Activated CD8-positive, alpha-beta T cell treated with anti-CD3 and anti-CD28 coated beads, Interleukin-2, amount 10 ng/mL, durations not matched to agents 7 days and 5 days (primary cell): ENCODE measurements at regions of chr12 and their contacts with region 1.

Region 1: DNA sequence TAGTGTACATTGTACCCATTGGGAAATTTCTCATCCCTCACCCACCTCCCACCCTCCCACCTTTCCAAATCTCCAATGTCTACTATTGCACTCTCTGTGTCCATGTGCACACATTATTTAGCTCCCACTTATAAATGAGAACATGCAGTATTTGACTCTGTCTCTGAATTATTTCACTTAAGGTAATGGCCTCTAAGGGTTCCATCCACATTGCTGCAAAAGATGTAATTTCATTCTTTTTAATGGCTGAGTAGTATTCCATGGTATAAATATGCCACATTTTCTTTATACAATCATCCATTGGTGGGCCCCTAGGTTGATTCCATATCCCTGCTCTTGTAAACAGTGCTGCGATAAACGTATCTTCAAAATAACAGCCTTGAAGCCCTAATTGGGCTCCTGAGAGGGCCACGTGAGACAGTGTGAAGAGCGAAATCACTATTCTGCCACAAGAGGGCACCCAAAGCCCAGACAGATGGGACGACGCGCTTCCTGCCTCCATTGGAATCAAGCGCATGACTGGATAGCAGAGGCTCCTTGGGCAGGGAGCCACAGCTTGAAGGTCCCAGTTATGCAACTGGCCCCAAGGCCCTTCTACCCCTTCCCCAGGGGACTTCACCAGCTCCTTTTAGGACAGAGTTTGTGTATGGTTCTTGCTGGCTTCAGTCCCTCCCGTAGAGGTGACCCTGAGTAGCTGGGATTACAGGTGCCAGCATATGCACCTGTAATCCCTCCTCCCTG is 21.3 kb upstream of the CD27 start:
- DNase-seq: peak; percentile 88
- ATAC-seq: peak; percentile 75
- H3K4me3 Mint-ChIP-seq: no peak overlapping the region
- H3K27ac Mint-ChIP-seq: peak overlapping the region; percentile 83
- H3K4me1 Mint-ChIP-seq: peaks cover 49% of the 10 kb centered on the region
- H3K27me3 Mint-ChIP-seq: no peaks in the 10 kb centered on the region

Region 2: DNA sequence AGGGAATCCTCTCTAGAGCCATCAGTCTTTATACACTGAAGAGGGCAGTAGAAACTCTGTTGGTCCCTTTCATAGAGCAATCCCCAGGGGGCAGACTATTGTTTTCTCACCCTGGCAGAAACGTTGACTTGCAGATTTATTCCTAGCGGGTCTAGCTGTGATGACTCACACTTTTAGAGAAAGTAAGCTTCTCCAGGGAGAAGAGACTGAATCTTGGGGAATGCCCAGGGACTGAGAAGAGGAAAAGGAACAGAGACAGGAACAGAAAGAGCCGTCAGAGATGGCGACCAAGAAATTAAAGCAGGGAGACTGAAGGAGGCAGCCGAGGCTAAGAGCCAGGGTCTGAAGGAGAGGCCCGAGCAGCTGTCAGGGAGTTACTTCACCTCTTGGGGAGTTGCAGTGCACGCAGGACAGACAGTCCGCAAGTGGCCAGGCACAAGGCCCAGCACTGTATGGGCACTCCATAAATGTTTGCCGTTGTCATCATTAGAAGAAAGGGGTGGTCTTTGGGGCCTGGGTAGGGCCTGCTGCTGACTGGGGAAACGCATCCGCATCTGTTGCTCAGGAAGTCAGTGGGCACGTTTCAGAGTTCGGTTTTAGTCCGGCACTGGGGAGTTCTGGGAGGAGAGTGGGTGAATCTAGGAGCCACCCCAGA is 100.0 kb before region 1 on chr12:
- CTCF ChIA-PET with region 1: interaction called, 21 read pairs
- POLR2A ChIA-PET with region 1: no interaction called
- DNase-seq: peak; percentile 60
- ATAC-seq: peak; percentile 73
- H3K4me3 Mint-ChIP-seq: peak overlapping the region; percentile 45
- H3K27ac Mint-ChIP-seq: peak overlapping the region; percentile 87
- H3K4me1 Mint-ChIP-seq: peaks cover 62% of the 10 kb centered on the region
- H3K27me3 Mint-ChIP-seq: no peaks in the 10 kb centered on the region

Region 3: GRCh38 chr12:6434205-6435140 is 11.0 kb after region 1 on chr12:
- CTCF ChIA-PET with region 1: interaction called, 35 read pairs
- POLR2A ChIA-PET with region 1: interaction called, 5 read pairs
- DNase-seq: peak; percentile 62
- ATAC-seq: peak; percentile 87
- H3K4me3 Mint-ChIP-seq: peak overlapping the region; percentile 50
- H3K27ac Mint-ChIP-seq: peak overlapping the region; percentile 91
- H3K4me1 Mint-ChIP-seq: peaks cover 54% of the 10 kb centered on the region
- H3K27me3 Mint-ChIP-seq: no peaks in the 10 kb centered on the region

Region 4: GRCh38 chr12:6451348-6452244 is 28.2 kb after region 1 on chr12 and contains the start of gene TAPBPL:
- CTCF ChIA-PET with region 1: interaction called, 288 read pairs
- POLR2A ChIA-PET with region 1: interaction called, 29 read pairs
- DNase-seq: peak; percentile 88
- ATAC-seq: peak; percentile 85
- H3K4me3 Mint-ChIP-seq: peak within 1 kb of the TSS; percentile 99
- H3K27ac Mint-ChIP-seq: peak within 1 kb of the TSS; percentile 99
- H3K4me1 Mint-ChIP-seq: peaks cover 78% of the 10 kb centered on the region
- H3K27me3 Mint-ChIP-seq: no peaks in the 10 kb centered on the region
- total RNA-seq, gene TAPBPL: 31.2 to 32.5 TPM

Region 5: GRCh38 chr12:6470375-6471163 is 47.1 kb after region 1 on chr12 and contains the start of gene VAMP1:
- CTCF ChIA-PET with region 1: interaction called, 288 read pairs
- POLR2A ChIA-PET with region 1: interaction called, 38 read pairs
- DNase-seq: peak; percentile 99
- ATAC-seq: peak; percentile 93
- H3K4me3 Mint-ChIP-seq: peak within 1 kb of the TSS; percentile 93
- H3K27ac Mint-ChIP-seq: peak within 1 kb of the TSS; percentile 93
- H3K4me1 Mint-ChIP-seq: peaks cover 56% of the 10 kb centered on the region
- H3K27me3 Mint-ChIP-seq: peaks cover 2% of the 10 kb centered on the region
- total RNA-seq, gene VAMP1: 46.6 to 48.9 TPM

Region 6: GRCh38 chr12:6533923-6534694 is 110.7 kb after region 1 on chr12 and contains the start of gene GAPDH:
- CTCF ChIA-PET with region 1: interaction called, 97 read pairs
- POLR2A ChIA-PET with region 1: interaction called, 24 read pairs
- DNase-seq: peak; percentile 94
- ATAC-seq: peak; percentile 62
- H3K4me3 Mint-ChIP-seq: peak within 1 kb of the TSS; percentile 99
- H3K27ac Mint-ChIP-seq: peak within 1 kb of the TSS; percentile 100
- H3K4me1 Mint-ChIP-seq: peaks cover 59% of the 10 kb centered on the region
- H3K27me3 Mint-ChIP-seq: no peaks in the 10 kb centered on the region
- total RNA-seq, gene GAPDH: 6,175 to 6,471 TPM